Right ventricle myocardium superior (tissue), 1 donor: ENCODE measurements at regions of chr3 and their contacts with region 1.

Region 1: GRCh38 chr3:156837115-156837514 is 11.0 kb downstream of the LEKR1 start:
- DNase-seq: no peak
- ATAC-seq: no peak

Region 2: GRCh38 chr3:156449712-156450574 is 387.2 kb before region 1 on chr3:
- intact Hi-C with region 1: no loop called
- DNase-seq: no peak
- ATAC-seq: peak; percentile 76

Region 3: GRCh38 chr3:157130467-157131251 is 293.5 kb after region 1 on chr3:
- intact Hi-C with region 1: loop called (anchors 10 kb)
- DNase-seq: peak; percentile 56
- ATAC-seq: peak; percentile 7